ENCODE measurements at regions of chr22 and their contacts with region 1.

Region 1: GRCh38 chr22:30089655-30089974 is 9.4 kb downstream of the HORMAD2 start:
- DNase-seq: no peak
- ATAC-seq: peak in 1 of 2 experiments; percentile 45; a peak in 3 of 6 replicates
- H3K4me3 ChIP-seq: no peak overlapping the region
- H3K27ac ChIP-seq: peak overlapping the region; percentile 53 to 88
- H3K4me1 ChIP-seq: peaks cover 10% of the 10 kb centered on the region; the same call in 1 of the 3 replicates
- CTCF ChIP-seq: no peak
- EP300 ChIP-seq: no peak
- POLR2A ChIP-seq: no peak
- RAD21 ChIP-seq: no peak

Region 2: GRCh38 chr22:29635734-29636357 is 453.8 kb before region 1 on chr22:
- CTCF ChIA-PET with region 1: interaction called, 51 read pairs
- POLR2A ChIA-PET with region 1: no interaction called
- DNase-seq: peak; percentile 28 to 62
- ATAC-seq: peak; percentile 89; a peak in 5 of 6 replicates
- H3K4me3 ChIP-seq: no peak overlapping the region
- H3K27ac ChIP-seq: no peak overlapping the region
- H3K4me1 ChIP-seq: peaks cover 9% of the 10 kb centered on the region; the same call in 2 of the 3 replicates
- CTCF ChIP-seq: peak; percentile 70
- EP300 ChIP-seq: no peak
- POLR2A ChIP-seq: no peak
- RAD21 ChIP-seq: peak; percentile 67 to 74

Region 3: GRCh38 chr22:29689880-29690213 is 399.8 kb before region 1 on chr22:
- CTCF ChIA-PET with region 1: interaction called, 12 read pairs
- POLR2A ChIA-PET with region 1: no interaction called
- DNase-seq: peak in 1 of 2 experiments; percentile 30
- ATAC-seq: peak; percentile 57 to 85; a peak in 4 of 6 replicates
- H3K4me3 ChIP-seq: no peak overlapping the region
- H3K27ac ChIP-seq: no peak overlapping the region
- H3K4me1 ChIP-seq: no peaks in the 10 kb centered on the region
- CTCF ChIP-seq: peak; percentile 58
- EP300 ChIP-seq: no peak
- POLR2A ChIP-seq: no peak
- RAD21 ChIP-seq: peak; percentile 62 to 67; a peak in 4 of 5 replicates

Region 4: DNA sequence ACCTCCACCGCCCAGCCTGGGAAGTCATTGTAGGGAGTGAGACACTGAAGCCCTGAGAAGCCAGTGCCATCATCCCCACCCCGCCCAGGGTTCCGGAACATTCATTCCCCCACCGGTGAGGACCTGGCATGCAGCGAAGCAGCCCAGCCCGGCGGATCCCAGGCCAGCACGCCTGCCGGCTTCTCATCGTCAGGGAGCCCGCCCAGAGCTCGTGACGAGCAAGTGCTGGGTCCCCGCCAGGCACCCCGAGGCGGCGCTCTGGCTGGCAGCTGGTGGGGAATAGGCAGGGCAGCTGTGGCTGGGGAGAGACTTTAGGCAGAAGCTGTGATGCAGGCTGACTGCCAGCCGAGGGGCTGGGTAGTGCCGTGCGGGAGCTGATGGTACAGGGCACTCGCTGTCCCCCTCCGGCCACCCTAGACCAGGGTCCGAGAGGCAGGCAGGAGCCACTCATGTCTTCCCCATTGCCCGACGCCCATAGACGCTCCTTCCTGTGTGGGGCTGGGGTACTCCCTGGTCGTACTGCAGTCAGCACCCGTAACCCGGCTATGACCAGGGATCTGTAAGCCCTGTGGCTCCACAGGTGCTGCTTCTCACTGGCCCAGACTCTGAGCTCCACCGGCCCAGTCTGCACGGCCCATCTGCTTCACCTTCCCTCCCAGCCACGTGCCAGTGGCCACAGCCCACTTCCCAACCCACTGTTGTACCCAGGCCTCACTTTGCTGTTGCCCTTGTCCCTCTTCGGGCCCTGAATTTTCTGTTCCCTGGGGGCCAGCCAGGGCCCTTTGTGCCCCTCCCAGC is 394.3 kb before region 1 on chr22:
- CTCF ChIA-PET with region 1: interaction called, 12 read pairs
- POLR2A ChIA-PET with region 1: no interaction called
- DNase-seq: no peak
- ATAC-seq: no peak
- H3K4me3 ChIP-seq: no peak overlapping the region
- H3K27ac ChIP-seq: no peak overlapping the region
- H3K4me1 ChIP-seq: no peaks in the 10 kb centered on the region
- CTCF ChIP-seq: no peak
- EP300 ChIP-seq: no peak
- POLR2A ChIP-seq: no peak
- RAD21 ChIP-seq: no peak